ENCODE measurements at regions of chr10 and their contacts with region 1.

Region 1: GRCh38 chr10:71771821-71772617 is 1.3 kb downstream of the VSIR start:
- DNase-seq: peak; percentile 82 to 92 (median 84)
- ATAC-seq: peak; percentile 50 to 78 (median 73)
- H3K4me3 ChIP-seq: peak overlapping the region; percentile 70 to 96 (median 85)
- H3K27ac ChIP-seq: peak overlapping the region; percentile 82 to 98 (median 97)
- H3K4me1 ChIP-seq: peaks cover 14 to 96% (median 72%) of the 10 kb centered on the region in 12 donors
- H3K27me3 ChIP-seq: no peaks in the 10 kb centered on the region
- CTCF ChIP-seq: no peak
- POLR2A ChIP-seq: peak in 1 of 2 donors; percentile 71

Region 2: GRCh38 chr10:71554671-71555070 is 217.3 kb before region 1 on chr10:
- intact Hi-C with region 1: no loop called
- DNase-seq: no peak
- ATAC-seq: no peak
- H3K4me3 ChIP-seq: no peak overlapping the region
- H3K27ac ChIP-seq: no peak overlapping the region
- H3K4me1 ChIP-seq: no peaks in the 10 kb centered on the region
- H3K27me3 ChIP-seq: no peaks in the 10 kb centered on the region
- CTCF ChIP-seq: no peak
- POLR2A ChIP-seq: no peak

Region 3: DNA sequence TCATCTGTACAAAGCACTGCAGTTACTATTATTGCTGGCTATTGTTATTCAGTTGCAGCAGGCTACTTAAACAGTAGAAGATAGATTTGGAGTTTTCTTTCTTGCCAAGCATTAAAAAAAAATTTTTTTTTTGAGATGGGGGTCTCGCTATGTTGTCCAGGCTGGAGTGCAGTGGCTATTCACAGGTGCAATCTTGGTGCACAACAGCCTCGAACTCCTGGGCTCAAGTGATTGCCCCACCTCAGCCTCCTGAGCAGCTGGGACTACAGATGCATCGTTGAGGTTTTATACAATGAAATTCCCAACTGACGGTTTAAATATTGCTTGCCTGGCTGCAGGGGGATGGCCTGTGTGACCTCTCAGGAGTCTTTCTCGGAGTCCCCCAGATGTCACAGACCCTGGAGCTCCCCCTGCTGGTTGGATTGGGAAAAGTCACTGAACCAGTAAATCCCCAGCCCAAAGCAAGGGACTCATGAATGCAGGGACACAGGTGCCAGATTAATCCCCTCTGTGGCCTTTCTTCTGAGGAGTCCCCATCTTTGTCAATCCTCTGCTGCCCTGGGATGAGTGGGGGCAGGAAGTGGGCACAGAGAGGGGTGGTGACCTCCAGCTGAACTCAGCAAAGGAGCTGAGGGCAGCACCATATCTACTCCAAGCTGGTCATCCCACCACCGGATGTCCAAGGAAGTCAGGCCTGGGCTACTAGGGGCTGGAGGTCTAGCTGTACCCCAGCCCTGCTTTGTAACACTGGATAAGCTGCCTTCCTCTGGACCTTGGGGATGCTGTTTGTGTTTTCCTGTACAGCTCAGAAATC is 202.0 kb before region 1 on chr10:
- intact Hi-C with region 1: no loop called
- DNase-seq: peak; percentile 51 to 74 (median 71)
- ATAC-seq: peak in 3 of 4 donors; percentile 22 to 73 (median 62)
- H3K4me3 ChIP-seq: no peak overlapping the region
- H3K27ac ChIP-seq: no peak overlapping the region
- H3K4me1 ChIP-seq: no peaks in the 10 kb centered on the region
- H3K27me3 ChIP-seq: no peaks in the 10 kb centered on the region
- CTCF ChIP-seq: peak; percentile 80 to 94 (median 86)
- POLR2A ChIP-seq: no peak

Region 4: GRCh38 chr10:71713135-71714030 is 58.6 kb before region 1 on chr10:
- intact Hi-C with region 1: loop called in 7 of 10 experiments (anchors 2 to 5 kb)
- DNase-seq: peak; percentile 84 to 91 (median 88)
- ATAC-seq: peak; percentile 65 to 87 (median 84)
- H3K4me3 ChIP-seq: peak overlapping the region in 3 of 12 donors; percentile 1 to 23 (median 5)
- H3K27ac ChIP-seq: peak overlapping the region; percentile 82 to 96 (median 91)
- H3K4me1 ChIP-seq: peaks cover 8 to 65% (median 46%) of the 10 kb centered on the region in 12 donors
- H3K27me3 ChIP-seq: no peaks in the 10 kb centered on the region
- CTCF ChIP-seq: peak in 4 of 12 donors; percentile 17 to 28 (median 22)
- POLR2A ChIP-seq: peak in 1 of 2 donors; percentile 36

Region 5: GRCh38 chr10:71727738-71728737 is 44.0 kb before region 1 on chr10:
- intact Hi-C with region 1: loop called in 4 of 10 experiments (anchors 2 to 5 kb)
- DNase-seq: peak in 4 of 5 donors; percentile 69 to 86 (median 72)
- ATAC-seq: peak; percentile 60 to 80 (median 69)
- H3K4me3 ChIP-seq: peak overlapping the region in 1 of 12 donors; percentile 0
- H3K27ac ChIP-seq: peak overlapping the region; percentile 18 to 95 (median 76)
- H3K4me1 ChIP-seq: peaks cover 0 to 65% (median 35%) of the 10 kb centered on the region in 12 donors
- H3K27me3 ChIP-seq: no peaks in the 10 kb centered on the region
- CTCF ChIP-seq: no peak
- POLR2A ChIP-seq: no peak

Region 6: GRCh38 chr10:71748671-71749191 is 23.3 kb before region 1 on chr10:
- intact Hi-C with region 1: loop called in 3 of 10 experiments (anchors 2 kb)
- DNase-seq: peak; percentile 81 to 91 (median 84)
- ATAC-seq: peak; percentile 54 to 75 (median 70)
- H3K4me3 ChIP-seq: peak overlapping the region in 2 of 12 donors; percentile 8 to 10
- H3K27ac ChIP-seq: peak overlapping the region; percentile 76 to 96 (median 86)
- H3K4me1 ChIP-seq: peaks cover 35 to 99% (median 56%) of the 10 kb centered on the region in 12 donors
- H3K27me3 ChIP-seq: no peaks in the 10 kb centered on the region
- CTCF ChIP-seq: peak in 4 of 12 donors; percentile 6 to 25 (median 14)
- POLR2A ChIP-seq: peak in 1 of 2 donors; percentile 22

Region 7: DNA sequence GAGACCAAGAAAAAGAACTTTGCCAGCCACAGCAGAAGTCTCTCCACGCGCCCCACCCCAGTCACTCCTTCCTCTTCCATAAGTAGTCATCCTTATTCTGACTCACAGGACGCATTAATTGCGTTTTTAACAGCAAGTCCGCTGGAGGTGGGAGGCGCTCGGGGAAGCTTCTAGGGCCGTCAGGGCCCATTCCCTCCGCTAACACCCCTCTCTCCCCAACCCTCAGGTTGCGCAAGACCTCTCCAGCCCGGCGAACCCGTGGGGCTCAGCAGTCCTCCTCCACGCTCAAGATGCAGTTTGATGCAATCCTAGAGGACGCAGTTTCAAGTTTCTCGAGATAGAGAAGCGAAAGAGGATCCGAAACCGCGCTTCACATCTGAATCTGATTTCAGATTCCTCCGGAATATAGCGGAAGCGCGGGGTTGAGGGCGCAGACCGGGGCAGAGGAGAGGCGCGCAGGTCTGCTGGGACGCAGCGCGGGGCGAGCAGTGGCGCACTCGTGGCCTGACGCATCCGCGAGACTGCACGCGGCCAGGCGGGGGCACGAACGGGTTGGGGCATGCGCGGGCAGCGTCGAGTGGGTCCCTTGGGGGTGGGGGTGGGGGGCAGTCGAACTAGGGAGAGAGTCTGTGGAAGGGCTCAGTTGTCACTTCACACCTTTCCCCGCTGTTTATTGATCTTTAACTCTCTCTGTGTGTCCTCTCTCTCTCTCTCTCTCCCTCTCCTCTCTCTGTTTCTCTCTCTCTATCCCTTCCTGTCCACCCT is 116.8 kb after region 1 on chr10:
- intact Hi-C with region 1: loop called in 1 of 10 experiments (anchors 10 kb)
- DNase-seq: peak; percentile 78 to 91 (median 87)
- ATAC-seq: peak; percentile 76 to 92 (median 92)
- H3K4me3 ChIP-seq: peak overlapping the region; percentile 26 to 70 (median 57)
- H3K27ac ChIP-seq: peak overlapping the region in 11 of 12 donors; percentile 50 to 96 (median 65)
- H3K4me1 ChIP-seq: peaks cover 0 to 61% (median 10%) of the 10 kb centered on the region in 12 donors
- H3K27me3 ChIP-seq: no peaks in the 10 kb centered on the region
- CTCF ChIP-seq: peak in 3 of 12 donors; percentile 5 to 27 (median 15)
- POLR2A ChIP-seq: peak in 1 of 2 donors; percentile 37

Measured in heart left ventricle (tissue), 16 donors.